ENCODE measurements at regions of chr17 and their contacts with region 1.

Region 1: DNA sequence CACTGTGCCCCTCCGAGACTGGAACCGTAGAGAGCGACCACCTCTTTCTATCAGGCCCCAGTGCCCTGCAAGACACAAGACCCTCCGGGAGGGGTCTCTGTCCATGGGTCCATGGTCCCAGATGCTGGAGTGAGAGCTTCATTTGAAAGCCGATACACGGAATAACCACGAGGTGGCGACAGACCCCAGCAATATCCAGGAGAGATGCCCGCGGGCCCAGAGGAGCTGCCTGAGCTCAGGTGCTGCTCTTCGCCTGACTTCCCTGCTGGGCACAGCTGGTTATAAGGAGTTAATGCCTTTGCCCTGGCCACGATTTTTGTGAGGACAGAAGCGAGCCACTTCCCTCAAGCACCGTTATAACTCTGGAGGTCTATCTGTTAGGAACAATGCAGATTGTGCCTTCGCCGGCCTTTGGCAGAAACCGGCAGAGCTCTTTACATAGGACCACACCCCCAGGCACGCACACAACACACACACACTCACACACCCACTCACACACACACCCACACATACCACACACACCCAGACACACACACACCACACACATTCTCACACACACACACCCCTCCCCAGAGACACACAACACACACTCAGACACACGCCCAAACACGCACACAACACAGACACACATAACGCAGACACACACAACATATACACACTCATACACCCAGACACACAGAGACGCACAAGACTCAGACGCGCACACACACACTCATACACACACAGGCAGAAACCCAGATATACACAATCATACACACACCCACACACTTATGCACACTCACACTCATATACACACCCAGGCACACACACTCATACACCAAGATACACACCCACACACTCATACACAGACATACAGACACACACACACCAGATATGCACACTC is 436.4 kb downstream of the SOX9 start:
- DNase-seq: peak; percentile 22
- H3K4me3 ChIP-seq: no peak overlapping the region
- H3K27ac ChIP-seq: no peak overlapping the region
- H3K4me1 ChIP-seq: no peaks in the 10 kb centered on the region
- H3K27me3 ChIP-seq: no peaks in the 10 kb centered on the region
- CTCF ChIP-seq: peak; percentile 66 to 72
- POLR2A ChIP-seq: no peak

Region 2: GRCh38 chr17:70767102-70767701 is 1790.0 kb before region 1 on chr17:
- CTCF ChIA-PET with region 1: interaction called, 15 read pairs
- POLR2A ChIA-PET with region 1: no interaction called
- dilution Hi-C with region 1: no loop called
- intact Hi-C with region 1: no loop called
- DNase-seq: no peak
- H3K4me3 ChIP-seq: no peak overlapping the region
- H3K27ac ChIP-seq: no peak overlapping the region
- H3K4me1 ChIP-seq: no peaks in the 10 kb centered on the region
- H3K27me3 ChIP-seq: no peaks in the 10 kb centered on the region
- CTCF ChIP-seq: peak; percentile 17 to 23
- POLR2A ChIP-seq: no peak

Region 3: GRCh38 chr17:72587773-72588511 is 30.8 kb after region 1 on chr17:
- CTCF ChIA-PET with region 1: interaction called, 13 read pairs
- POLR2A ChIA-PET with region 1: no interaction called
- dilution Hi-C with region 1: no loop called
- intact Hi-C with region 1: no loop called
- DNase-seq: no peak
- H3K4me3 ChIP-seq: no peak overlapping the region
- H3K27ac ChIP-seq: no peak overlapping the region
- H3K4me1 ChIP-seq: peaks cover 4% of the 10 kb centered on the region
- H3K27me3 ChIP-seq: peaks cover 7 to 10% of the 10 kb centered on the region in 2 experiments
- CTCF ChIP-seq: no peak
- POLR2A ChIP-seq: no peak

Region 4: DNA sequence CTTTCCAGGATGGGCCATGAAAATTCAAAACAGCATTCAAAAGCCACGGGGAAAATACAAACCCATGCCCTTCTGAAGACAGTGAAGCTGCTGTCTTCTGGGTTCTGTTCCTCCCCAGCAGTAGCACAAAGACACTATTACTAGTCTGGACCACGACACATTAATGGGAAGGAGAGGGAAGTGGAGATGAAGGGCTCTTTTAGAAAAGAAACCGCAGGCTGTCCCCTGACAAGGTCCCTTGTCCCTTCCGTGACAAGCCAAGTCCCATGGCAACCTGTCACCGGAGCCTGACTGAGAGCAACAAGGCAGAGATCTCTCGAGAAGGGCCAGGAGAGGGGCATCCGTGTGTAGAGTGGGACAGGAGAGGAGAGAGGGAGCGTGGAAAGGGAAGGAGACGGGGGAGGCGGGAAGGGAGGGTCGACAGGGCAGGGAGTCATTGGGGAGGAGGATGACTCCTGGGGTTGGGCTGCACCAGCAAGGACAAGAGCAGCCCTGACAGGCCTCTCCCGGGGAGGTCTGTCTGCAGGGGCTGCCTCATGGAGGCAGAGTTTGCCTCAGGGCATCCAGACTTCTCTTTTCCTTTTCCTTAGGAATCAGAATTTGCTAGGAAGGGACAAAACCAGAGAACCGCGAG is 99.1 kb after region 1 on chr17:
- CTCF ChIA-PET with region 1: no interaction called
- POLR2A ChIA-PET with region 1: no interaction called
- dilution Hi-C with region 1: no loop called
- intact Hi-C with region 1: no loop called
- DNase-seq: no peak
- H3K4me3 ChIP-seq: no peak overlapping the region
- H3K27ac ChIP-seq: no peak overlapping the region
- H3K4me1 ChIP-seq: no peaks in the 10 kb centered on the region
- H3K27me3 ChIP-seq: no peaks in the 10 kb centered on the region
- CTCF ChIP-seq: no peak
- POLR2A ChIP-seq: no peak

Region 5: DNA sequence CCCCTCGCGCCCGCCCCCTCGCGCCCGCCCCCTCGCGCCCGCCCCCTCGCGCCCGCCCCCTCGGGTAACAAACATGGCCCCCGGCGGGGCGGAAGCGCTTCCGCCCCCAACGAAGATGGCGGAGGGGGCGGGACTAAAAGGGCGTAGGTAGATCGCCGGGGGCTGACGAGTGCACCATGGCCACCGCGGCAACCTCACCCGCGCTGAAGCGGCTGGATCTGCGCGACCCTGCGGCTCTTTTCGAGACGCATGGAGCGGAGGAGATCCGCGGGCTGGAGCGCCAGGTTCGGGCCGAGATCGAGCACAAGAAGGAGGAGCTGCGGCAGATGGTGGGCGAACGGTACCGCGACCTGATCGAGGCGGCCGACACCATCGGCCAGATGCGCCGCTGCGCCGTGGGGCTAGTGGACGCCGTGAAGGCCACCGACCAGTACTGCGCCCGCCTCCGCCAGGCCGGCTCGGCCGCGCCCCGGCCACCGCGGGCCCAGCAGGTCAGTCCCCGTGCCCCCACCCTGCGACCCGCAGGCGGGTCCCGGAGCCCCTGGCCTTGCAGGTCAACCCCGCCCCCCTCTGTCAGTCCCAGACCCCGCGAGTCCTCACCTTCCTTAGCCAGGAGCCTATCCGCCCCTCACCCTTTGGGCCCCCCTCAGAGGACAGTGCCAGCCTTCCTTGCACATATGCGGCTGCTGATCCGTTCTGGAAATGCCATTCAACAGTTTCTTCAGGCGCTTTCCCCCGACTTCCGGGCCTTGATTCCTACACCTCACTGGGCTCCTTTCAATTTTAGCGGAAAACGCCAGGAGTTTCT is 635.9 kb after region 1 on chr17 and contains the start of gene COG1:
- CTCF ChIA-PET with region 1: interaction called, 24 read pairs
- POLR2A ChIA-PET with region 1: no interaction called
- dilution Hi-C with region 1: no loop called
- intact Hi-C with region 1: no loop called
- DNase-seq: peak; percentile 86
- H3K4me3 ChIP-seq: peak within 1 kb of the TSS; percentile 78 to 94 (median 78)
- H3K27ac ChIP-seq: peak within 1 kb of the TSS; percentile 56
- H3K4me1 ChIP-seq: peaks cover 14% of the 10 kb centered on the region
- H3K27me3 ChIP-seq: no peaks in the 10 kb centered on the region
- CTCF ChIP-seq: no peak
- POLR2A ChIP-seq: peak; percentile 77
- total RNA-seq, gene COG1: 38.6 and 39.0 TPM in 2 replicates

Region 6: DNA sequence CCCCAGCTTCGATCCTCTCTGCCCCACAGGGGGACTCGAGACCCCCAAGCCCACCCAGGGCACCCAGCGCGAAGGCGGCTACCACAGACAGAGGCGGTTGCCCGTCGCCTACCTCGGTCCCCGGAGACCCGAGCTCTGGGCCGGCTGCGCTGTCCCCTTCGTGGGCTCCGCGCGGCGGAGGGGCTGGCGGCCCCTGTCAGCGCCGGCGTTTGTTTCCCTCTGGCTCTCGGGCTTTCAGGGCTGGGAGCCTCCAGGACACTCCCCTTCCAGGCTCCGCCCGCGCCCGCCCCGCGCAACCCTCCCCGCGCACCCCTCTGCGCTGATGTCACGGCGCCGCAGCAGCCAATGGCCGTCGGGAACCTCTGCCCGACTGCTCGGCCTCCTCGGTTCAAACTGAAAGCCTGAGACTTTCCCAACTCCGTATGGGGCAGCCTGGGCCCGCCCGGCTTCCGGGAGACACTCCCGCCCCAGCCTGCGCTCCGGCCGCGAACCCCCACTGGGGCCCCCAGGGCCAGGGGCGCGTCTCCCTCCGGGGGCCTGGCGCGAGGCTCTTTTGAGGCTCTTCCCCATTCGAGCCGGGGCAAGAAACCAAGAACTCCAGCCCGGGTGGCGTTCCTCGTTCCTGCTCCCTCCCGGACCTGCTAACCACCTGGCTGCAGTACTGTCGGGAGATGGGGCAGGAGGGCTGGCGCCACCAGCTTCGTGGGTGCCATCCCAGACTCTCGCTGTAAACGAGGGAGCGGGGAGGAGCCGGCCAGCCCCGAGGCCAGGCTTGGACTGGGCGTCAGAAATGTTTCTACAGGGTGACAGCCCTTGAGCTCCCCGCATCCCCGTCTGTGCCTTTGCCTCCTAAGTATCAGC is 754.8 kb after region 1 on chr17 and contains the start of gene CDC42EP4:
- CTCF ChIA-PET with region 1: interaction called, 12 read pairs
- POLR2A ChIA-PET with region 1: no interaction called
- dilution Hi-C with region 1: no loop called
- intact Hi-C with region 1: no loop called
- DNase-seq: peak; percentile 95
- H3K4me3 ChIP-seq: peak within 1 kb of the TSS; percentile 82 to 97 (median 88)
- H3K27ac ChIP-seq: peak within 1 kb of the TSS; percentile 80
- H3K4me1 ChIP-seq: peaks cover 27% of the 10 kb centered on the region
- H3K27me3 ChIP-seq: peaks cover 2% of the 10 kb centered on the region in 2 experiments
- CTCF ChIP-seq: no peak
- POLR2A ChIP-seq: peak; percentile 80
- total RNA-seq, gene CDC42EP4: 18.8 and 19.6 TPM in 2 replicates

Region 7: GRCh38 chr17:74203439-74204240 is 1646.5 kb after region 1 on chr17 and contains the start of gene RPL38:
- CTCF ChIA-PET with region 1: interaction called, 35 read pairs
- POLR2A ChIA-PET with region 1: no interaction called
- dilution Hi-C with region 1: no loop called
- intact Hi-C with region 1: no loop called
- DNase-seq: peak; percentile 97
- H3K4me3 ChIP-seq: peak within 1 kb of the TSS; percentile 72 to 87 (median 78)
- H3K27ac ChIP-seq: peak within 1 kb of the TSS; percentile 74
- H3K4me1 ChIP-seq: peaks cover 22% of the 10 kb centered on the region
- H3K27me3 ChIP-seq: peaks cover 8 to 14% of the 10 kb centered on the region in 2 experiments
- CTCF ChIP-seq: peak; percentile 97 to 99
- POLR2A ChIP-seq: peak; percentile 98
- total RNA-seq, gene RPL38: 1,006 and 1,060 TPM in 2 replicates

Measured in endothelial cell of umbilical vein (primary cell).